ENCODE measurements at regions of chr5 and their contacts with region 1.

Region 1: GRCh38 chr5:74919487-74919886 is 53.3 kb upstream of the FAM169A start:
- DNase-seq: no peak
- H3K4me3 ChIP-seq: no peak overlapping the region
- H3K27ac ChIP-seq: no peak overlapping the region
- H3K4me1 ChIP-seq: no peaks in the 10 kb centered on the region
- H3K27me3 ChIP-seq: no peaks in the 10 kb centered on the region
- CTCF ChIP-seq: peak; percentile 31 to 57 (median 35)

Region 2: DNA sequence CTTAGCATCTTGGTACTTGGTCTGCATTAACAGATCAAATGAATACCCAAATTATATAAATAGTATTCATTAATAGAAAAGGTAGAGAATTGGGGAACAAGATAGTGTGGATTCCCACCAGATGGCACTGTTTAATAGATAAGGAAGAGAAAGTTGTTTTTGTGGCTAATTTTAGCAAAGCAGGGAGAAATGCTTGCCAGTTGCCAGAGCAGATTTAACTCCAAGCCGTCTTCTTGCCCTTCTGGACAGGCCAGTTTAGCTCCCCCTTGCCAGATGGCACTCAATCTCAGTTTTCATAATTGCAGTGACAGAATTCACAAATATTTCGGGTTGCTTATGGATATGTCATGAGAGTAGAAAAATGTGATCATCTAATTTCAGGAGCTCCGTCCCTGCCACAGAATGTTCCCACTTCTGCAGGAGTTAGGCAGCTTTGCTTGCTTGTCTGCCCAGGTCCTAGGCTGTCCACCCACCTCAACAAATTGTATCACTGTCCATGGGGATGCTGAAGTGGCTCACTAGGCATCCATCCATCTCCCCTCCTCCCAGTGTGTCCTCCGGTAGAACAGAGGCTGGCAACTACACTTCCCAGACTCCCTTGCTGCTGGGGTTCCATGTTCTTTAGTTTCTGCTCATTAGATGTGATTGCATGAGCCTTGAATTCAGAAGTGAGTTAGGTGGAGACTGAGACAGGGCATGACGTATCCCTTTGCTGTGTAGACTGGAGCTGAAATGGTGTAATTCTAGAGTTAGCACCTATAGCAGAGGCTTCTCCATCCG is 246.3 kb before region 1 on chr5:
- intact Hi-C with region 1: loop called (anchors 2 kb)
- DNase-seq: no peak
- H3K4me3 ChIP-seq: peak overlapping the region; percentile 35 to 49
- H3K27ac ChIP-seq: peak overlapping the region; percentile 33 to 57
- H3K4me1 ChIP-seq: peaks cover 0 to 14% of the 10 kb centered on the region in 2 donors
- H3K27me3 ChIP-seq: no peaks in the 10 kb centered on the region
- CTCF ChIP-seq: peak in 2 of 3 experiments; percentile 40 to 54

Region 3: DNA sequence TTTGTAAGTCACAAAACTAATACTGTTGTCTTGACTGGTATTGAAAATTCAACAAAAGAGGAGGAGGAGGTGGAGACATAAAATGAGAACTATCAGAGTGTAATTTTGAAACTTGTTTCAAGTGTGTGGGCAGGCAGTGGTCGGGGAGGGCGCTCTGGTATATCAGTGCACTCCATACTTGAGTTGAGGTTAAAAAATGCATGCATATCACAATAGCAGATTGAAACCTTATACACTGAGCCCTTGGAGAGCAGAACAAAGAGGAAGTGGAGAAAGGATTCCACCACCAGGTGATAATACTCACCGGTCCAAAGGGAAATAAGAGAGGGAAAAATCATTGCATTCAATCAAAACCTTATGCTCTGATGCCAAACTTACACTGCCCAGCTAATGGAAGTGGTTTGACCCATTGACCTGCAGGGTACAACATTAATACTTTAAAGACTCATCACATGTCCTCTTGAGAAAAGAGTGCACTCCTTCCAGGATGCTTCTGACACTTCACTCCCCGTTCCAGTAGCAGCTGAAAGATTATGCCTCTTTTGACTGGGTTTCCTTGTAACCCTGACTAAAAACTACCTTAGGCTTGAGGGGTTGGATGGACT is 26.2 kb after region 1 on chr5:
- intact Hi-C with region 1: no loop called
- DNase-seq: no peak
- H3K4me3 ChIP-seq: no peak overlapping the region
- H3K27ac ChIP-seq: no peak overlapping the region
- H3K4me1 ChIP-seq: peaks cover 0 to 3% of the 10 kb centered on the region in 2 donors
- H3K27me3 ChIP-seq: no peaks in the 10 kb centered on the region
- CTCF ChIP-seq: no peak

Region 4: DNA sequence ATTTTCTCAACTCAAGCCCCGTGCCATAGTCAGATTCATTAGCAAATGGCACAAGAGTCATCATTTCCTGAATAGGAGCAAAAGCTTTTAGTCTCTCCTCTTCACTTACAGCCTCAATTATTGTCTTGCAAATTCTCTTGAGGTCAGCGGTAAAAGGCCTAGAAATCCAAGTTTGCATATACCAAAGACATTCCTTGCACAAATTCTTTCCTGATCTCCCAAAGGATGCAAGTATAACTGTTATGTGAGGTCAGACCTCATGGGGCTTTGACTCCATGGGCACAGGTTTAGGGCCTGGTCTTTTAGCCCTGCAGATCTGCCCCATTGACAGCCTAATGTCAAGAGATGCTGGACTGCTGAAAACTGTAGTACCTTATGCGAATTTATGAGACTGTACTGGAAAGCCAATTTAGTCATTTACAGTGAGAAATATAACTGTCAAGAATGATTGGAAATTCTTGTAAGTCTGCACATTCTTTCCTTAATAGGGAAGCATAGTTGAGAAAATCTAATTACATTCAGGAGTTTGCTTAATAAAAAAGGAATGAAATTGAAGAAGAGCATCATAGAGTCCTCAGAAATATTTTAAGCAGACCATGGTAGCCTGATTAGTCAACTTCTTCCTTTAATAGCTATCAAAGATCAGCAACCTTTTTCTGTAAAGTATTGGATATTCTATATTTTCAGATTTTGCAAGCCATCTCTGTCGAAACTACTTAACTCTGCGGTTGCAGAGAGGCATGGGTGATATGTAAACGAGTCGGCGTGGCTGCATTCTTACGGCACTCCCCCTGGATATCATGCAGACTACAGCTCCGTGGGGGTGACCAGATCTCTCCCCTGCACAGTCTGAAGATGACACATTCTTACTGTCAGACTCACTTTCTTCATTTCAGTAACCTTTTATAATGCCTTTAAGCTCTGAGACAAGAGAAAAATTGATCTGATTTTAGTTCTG is 87.7 kb after region 1 on chr5:
- intact Hi-C with region 1: no loop called
- DNase-seq: no peak
- H3K4me3 ChIP-seq: no peak overlapping the region
- H3K27ac ChIP-seq: no peak overlapping the region
- H3K4me1 ChIP-seq: no peaks in the 10 kb centered on the region
- H3K27me3 ChIP-seq: no peaks in the 10 kb centered on the region
- CTCF ChIP-seq: no peak